IMR-90 (cell line): ENCODE measurements at regions of chr10 and their contacts with region 1.

Region 1: DNA sequence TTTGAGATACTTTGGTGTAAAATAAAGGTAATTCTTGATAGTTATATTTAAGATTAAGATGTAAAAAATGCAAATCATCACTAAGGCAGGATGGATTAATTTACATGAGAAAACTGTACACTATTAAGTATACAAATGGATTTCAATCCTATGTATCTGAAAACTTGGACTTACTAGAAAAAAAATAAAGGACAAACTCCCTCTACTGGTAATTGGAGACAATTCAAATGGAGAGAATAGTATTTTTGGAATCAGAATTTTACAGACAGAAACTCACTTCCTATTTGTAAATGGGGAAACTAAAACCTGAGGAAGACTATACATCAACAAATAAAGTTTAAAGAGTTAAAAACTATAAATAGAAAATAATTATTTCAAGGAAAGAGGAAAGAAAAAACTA is 62.6 kb downstream of the CUL2 start:
- DNase-seq: peak; percentile 39
- ATAC-seq: 0 out of 2 replicates have a peak, but pooled peaks have one; percentile 24
- H3K4me3 ChIP-seq: no peak overlapping the region
- H3K27ac ChIP-seq: no peak overlapping the region
- H3K4me1 ChIP-seq: no peaks in the 10 kb centered on the region
- H3K27me3 ChIP-seq: no peaks in the 10 kb centered on the region
- CTCF ChIP-seq: peak; percentile 57
- POLR2A ChIP-seq: no peak
- RAD21 ChIP-seq: peak; percentile 48

Region 2: DNA sequence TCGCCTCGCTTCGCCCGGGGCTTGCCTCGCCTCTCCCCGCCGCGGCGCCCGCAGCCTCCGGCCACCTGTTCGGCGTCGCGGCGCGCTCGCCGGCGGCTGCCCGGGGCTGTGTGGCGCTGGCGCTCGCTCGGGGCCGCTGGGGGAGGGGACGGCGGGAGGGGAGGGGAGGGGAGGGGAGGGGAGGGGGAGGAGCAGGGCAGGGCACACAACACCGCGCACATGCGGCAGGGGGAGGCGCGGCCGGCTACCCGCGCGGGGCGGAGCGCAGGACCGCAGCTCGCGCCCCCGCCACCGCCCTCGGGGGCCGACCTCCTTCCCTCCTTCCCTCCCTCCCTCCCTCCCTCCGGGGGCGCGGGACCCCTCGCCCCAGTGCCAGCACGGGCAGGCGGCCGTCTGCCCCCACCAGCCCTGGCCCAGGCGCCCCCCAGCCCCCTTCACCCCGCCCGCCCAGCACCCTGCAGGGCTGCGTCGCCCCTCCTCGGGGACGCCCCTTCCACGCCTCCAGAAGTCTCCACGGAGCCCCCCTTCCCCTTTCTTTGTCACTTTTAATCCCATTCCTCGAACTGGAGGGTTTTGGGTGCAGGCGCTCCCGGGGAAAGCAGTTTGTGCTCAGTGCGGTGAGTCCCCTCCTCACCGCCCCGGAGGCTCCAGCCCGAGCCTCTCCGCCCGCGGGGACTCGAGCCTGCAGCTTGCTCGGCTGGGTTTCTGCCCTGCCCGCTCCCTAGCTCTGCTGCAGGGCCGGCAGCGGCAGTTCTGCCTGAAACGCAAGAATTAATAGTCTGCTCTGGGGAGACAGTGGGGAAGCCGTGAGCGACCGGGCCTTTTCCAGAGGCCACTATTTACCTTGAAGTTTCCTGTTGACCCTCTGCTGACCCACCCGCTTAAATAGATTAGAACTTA is 212.1 kb before region 1 on chr10 and contains the start of gene PARD3:
- CTCF ChIA-PET with region 1: no interaction called
- POLR2A ChIA-PET with region 1: no interaction called
- dilution Hi-C with region 1: no loop called
- in situ Hi-C with region 1: no loop called
- intact Hi-C with region 1: loop called (anchors 10 kb)
- DNase-seq: peak; percentile 51
- ATAC-seq: peak; percentile 85
- H3K4me3 ChIP-seq: peak within 1 kb of the TSS; percentile 98
- H3K27ac ChIP-seq: peak within 1 kb of the TSS; percentile 93
- H3K4me1 ChIP-seq: peaks cover 4% of the 10 kb centered on the region
- H3K27me3 ChIP-seq: peaks cover 2% of the 10 kb centered on the region; the same call in 1 of the 2 replicates
- CTCF ChIP-seq: no peak
- POLR2A ChIP-seq: no peak
- RAD21 ChIP-seq: no peak
- total RNA-seq, gene PARD3: 34.2 and 37.5 TPM in 2 replicates

Region 3: DNA sequence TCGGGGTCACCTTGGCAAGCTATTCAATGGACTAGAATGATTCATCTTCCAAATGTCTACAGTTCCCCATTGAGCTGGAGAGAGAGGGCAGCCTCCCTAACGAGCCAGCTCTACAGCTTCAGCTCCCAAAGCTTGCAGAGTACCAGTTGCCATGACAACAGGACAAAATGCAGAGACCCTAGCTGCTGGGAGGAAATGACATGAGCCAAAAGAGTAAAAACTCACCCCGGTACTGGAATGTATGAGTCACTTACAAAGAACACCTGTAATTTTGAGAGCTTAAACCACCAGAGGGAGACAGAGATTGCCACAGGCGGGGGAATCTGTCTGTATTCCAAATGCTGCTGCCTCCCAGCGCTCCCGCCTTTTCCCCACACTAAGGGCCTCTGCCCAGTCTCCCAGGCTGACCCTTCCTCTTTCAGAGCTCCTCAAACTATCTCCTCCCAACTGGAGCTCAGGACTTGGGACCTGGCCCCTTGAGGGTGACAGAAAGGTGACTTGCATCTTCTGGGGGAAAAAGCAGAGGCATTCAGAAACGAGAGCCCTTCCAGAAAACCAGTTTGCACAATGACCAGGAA is 32.9 kb before region 1 on chr10:
- CTCF ChIA-PET with region 1: interaction called, 18 read pairs
- POLR2A ChIA-PET with region 1: no interaction called
- dilution Hi-C with region 1: no loop called
- in situ Hi-C with region 1: no loop called
- intact Hi-C with region 1: loop called (anchors 2 kb)
- DNase-seq: peak; percentile 76
- ATAC-seq: peak; percentile 62
- H3K4me3 ChIP-seq: no peak overlapping the region
- H3K27ac ChIP-seq: no peak overlapping the region
- H3K4me1 ChIP-seq: peaks cover 2% of the 10 kb centered on the region; the same call in 1 of the 2 replicates
- H3K27me3 ChIP-seq: no peaks in the 10 kb centered on the region
- CTCF ChIP-seq: peak; percentile 66
- POLR2A ChIP-seq: no peak
- RAD21 ChIP-seq: peak; percentile 69